CD4-positive, alpha-beta T cell (primary cell): ENCODE measurements at regions of chr4 and their contacts with region 1.

Region 1: GRCh38 chr4:119394826-119395225 is 72.9 kb upstream of the FABP2 start:
- DNase-seq: no peak
- ATAC-seq: no peak
- H3K4me3 ChIP-seq: no peak overlapping the region
- H3K4me3 Mint-ChIP-seq: no peak overlapping the region
- H3K27ac ChIP-seq: no peak overlapping the region
- H3K27ac Mint-ChIP-seq: no peak overlapping the region
- H3K4me1 ChIP-seq: no peaks in the 10 kb centered on the region
- H3K4me1 Mint-ChIP-seq: no peaks in the 10 kb centered on the region
- H3K27me3 ChIP-seq: no peaks in the 10 kb centered on the region
- H3K27me3 Mint-ChIP-seq: no peaks in the 10 kb centered on the region
- CTCF ChIP-seq: no peak

Region 2: GRCh38 chr4:119016636-119017035 is 378.2 kb before region 1 on chr4:
- CTCF ChIA-PET with region 1: no interaction called
- POLR2A ChIA-PET with region 1: no interaction called
- intact Hi-C with region 1: no loop called
- DNase-seq: no peak
- ATAC-seq: no peak
- H3K4me3 ChIP-seq: no peak overlapping the region
- H3K4me3 Mint-ChIP-seq: no peak overlapping the region
- H3K27ac ChIP-seq: no peak overlapping the region
- H3K27ac Mint-ChIP-seq: no peak overlapping the region
- H3K4me1 ChIP-seq: no peaks in the 10 kb centered on the region
- H3K4me1 Mint-ChIP-seq: no peaks in the 10 kb centered on the region
- H3K27me3 ChIP-seq: peaks cover 0 to 10% of the 10 kb centered on the region in 2 experiments
- H3K27me3 Mint-ChIP-seq: peaks cover 40% of the 10 kb centered on the region
- CTCF ChIP-seq: no peak

Region 3: GRCh38 chr4:119337010-119337409 is 57.8 kb before region 1 on chr4:
- CTCF ChIA-PET with region 1: no interaction called
- POLR2A ChIA-PET with region 1: no interaction called
- intact Hi-C with region 1: loop called in 1 of 2 experiments (anchors 10 kb)
- DNase-seq: peak in 1 of 14 experiments; percentile 7
- ATAC-seq: no peak
- H3K4me3 ChIP-seq: no peak overlapping the region
- H3K4me3 Mint-ChIP-seq: no peak overlapping the region
- H3K27ac ChIP-seq: no peak overlapping the region
- H3K27ac Mint-ChIP-seq: no peak overlapping the region
- H3K4me1 ChIP-seq: no peaks in the 10 kb centered on the region
- H3K4me1 Mint-ChIP-seq: no peaks in the 10 kb centered on the region
- H3K27me3 ChIP-seq: no peaks in the 10 kb centered on the region
- H3K27me3 Mint-ChIP-seq: no peaks in the 10 kb centered on the region
- CTCF ChIP-seq: no peak

Region 4: DNA sequence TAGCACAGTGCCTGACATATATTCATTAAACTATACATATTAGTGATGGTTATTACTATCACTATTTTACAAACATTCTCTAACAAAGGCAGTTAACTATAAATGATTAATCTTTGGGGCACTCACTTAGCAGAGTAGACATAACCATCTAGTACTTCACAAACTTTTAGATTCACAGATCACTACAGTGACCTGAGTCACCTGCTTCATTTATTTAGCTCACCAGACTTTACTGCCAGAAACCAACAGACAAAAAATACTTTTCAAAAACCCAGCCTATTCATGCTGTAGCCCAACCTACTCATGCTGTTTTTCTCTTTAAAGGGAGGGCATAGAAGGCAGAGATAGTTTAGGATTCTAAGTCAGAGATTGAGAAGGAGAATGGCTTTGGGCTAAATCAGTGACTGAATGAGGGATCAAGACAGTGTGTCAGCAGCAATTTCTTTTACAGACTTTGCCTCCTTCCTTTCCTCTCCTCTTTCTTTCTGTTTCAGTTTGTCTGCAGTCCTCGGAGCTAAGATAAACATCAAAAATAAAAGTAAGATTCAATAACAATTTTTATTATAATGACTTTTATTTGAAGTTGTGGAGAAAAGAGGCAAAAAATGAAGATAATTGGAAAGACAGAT is 268.4 kb after region 1 on chr4:
- CTCF ChIA-PET with region 1: no interaction called
- POLR2A ChIA-PET with region 1: no interaction called
- intact Hi-C with region 1: no loop called
- DNase-seq: no peak
- ATAC-seq: no peak
- H3K4me3 ChIP-seq: no peak overlapping the region
- H3K4me3 Mint-ChIP-seq: no peak overlapping the region
- H3K27ac ChIP-seq: no peak overlapping the region
- H3K27ac Mint-ChIP-seq: no peak overlapping the region
- H3K4me1 ChIP-seq: no peaks in the 10 kb centered on the region
- H3K4me1 Mint-ChIP-seq: no peaks in the 10 kb centered on the region
- H3K27me3 ChIP-seq: peaks cover 0 to 9% of the 10 kb centered on the region in 2 experiments
- H3K27me3 Mint-ChIP-seq: peaks cover 46% of the 10 kb centered on the region
- CTCF ChIP-seq: no peak